Cardiac septum (tissue), 1 donor: ENCODE measurements at regions of chr16 and their contacts with region 1.

Region 1: DNA sequence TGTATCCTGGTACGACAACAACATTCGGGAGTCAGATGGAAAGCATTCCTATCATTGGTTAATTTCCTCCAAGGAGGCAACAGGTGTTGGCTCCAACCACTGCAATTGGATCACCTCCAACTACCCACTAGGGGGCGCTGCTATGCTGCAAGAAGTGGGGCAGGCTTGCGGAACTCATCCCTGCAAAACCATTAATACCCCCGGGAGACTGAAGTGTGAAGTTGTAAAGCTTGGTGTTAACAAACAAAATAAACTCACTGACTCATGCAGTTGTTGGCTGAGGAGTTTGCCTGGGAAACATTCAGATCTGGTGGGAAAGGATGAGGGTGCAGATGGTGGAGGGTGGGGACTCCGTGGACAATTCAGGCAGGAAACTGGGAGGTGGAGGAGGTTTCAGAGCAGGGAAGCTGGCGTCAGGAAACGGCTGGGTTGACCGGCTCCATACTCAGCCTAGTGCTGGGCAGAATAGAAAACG is 84.9 kb downstream of the HS3ST2 start:
- DNase-seq: peak; percentile 86

Region 2: DNA sequence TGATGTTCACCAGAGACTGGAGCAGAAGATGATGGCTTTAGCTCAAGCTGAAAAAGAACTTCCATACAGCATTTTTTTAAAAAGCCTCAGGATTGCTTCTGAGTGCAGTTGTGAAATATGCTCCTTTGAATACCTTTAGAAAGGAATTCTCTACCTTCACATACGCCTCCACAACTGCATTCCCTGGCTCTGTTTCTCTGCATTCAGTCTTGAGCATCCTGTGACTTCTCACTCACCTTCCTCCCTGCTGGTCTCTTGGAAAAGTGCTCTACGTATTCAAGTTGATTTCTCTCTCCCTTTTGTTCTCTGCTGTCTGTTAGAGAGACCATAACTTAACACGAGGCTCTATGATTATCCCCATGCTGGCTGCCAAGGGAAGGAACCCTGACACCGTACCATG is 50.5 kb before region 1 on chr16:
- intact Hi-C with region 1: no loop called
- DNase-seq: no peak

Region 3: GRCh38 chr16:22970209-22970865 is 71.4 kb after region 1 on chr16:
- intact Hi-C with region 1: loop called (anchors 5 kb)
- DNase-seq: no peak

Region 4: GRCh38 chr16:23060458-23061320 is 161.8 kb after region 1 on chr16:
- intact Hi-C with region 1: loop called (anchors 5 kb)
- DNase-seq: no peak